Activated CD4-positive, alpha-beta T cell treated with anti-CD3 and anti-CD28 coated beads for 36 hours (primary cell): ENCODE measurements at regions of chr9 and their contacts with region 1.

Region 1: DNA sequence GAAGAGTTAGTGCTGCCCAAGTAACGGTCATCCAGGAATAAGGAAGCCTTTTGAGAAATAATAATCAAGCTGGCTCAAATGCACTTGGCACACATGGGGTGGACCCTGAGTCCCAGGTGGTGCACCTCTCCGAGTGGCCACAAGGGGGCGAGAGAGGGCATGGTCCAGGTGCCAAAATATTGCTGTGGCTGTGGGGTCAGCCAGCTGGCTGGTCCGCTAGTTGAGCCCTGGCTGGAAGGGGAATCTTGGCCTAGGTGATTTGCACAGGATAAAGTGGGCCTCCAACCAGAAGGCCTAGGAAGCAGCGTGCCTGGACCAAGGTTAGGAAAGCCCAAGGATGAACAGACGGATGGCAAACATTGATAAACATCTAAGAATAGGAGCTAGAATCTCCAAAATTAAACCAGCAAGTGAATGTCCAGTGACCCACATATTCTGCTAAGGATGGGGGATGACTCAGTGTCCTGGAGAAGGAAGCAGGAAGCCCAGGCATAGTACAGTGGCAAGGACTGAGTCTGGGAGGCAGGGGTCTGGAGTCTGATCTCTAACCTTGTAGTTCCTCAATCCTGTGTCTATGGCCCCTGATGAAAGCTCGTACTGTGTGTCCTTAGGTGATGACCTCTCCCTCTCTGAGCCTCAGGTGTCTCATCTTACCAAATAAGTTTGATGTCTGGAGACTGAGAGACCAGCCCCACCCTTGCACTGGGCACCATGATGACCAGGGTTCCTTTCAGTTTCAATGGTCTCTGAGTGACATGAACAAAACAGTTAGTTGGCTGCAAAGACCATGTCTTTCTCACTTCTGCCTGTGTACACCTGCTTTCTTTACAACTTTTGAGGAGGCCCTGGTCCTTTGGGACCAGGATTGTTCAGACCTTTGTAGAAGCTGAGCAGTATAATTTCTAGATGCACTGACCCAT is 19.2 kb upstream of the SHB start:
- DNase-seq: peak; percentile 82
- ATAC-seq: peak; percentile 65
- H3K4me3 Mint-ChIP-seq: no peak overlapping the region
- H3K27ac Mint-ChIP-seq: no peak overlapping the region
- H3K4me1 Mint-ChIP-seq: no peaks in the 10 kb centered on the region
- H3K27me3 Mint-ChIP-seq: no peaks in the 10 kb centered on the region

Region 2: DNA sequence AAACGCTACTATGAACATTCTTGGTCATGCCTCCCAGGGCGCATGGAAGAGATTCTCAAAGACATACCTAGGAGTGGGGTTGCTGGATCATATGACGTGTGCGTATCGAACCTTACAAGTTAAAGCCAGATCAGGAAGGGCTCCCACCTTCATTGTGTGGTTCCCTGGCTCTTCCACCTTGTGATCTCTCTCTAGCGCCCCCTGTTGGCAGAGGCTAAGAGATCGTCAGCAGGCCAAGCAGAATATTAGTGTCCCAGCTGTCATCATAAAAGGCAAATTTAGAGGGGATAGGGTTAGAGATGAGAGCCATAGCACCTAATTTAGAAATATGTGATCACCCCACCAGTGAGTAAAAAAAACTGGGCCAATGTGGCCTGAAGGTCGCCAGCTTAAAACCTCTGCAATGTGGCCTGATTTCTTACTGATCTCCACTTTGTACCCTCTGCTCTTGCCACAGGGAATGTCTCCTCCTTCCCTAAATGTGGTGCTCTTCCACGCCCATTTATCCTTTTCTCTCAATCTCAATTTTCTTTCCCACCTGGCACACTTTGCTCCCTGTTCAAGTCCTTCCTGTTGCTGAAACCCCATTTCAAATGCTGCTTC is 72.4 kb after region 1 on chr9:
- CTCF ChIA-PET with region 1: interaction called, 9 read pairs
- POLR2A ChIA-PET with region 1: no interaction called
- intact Hi-C with region 1: loop called in 1 of 2 experiments (anchors 1 kb)
- DNase-seq: peak; percentile 83
- ATAC-seq: peak; percentile 72
- H3K4me3 Mint-ChIP-seq: no peak overlapping the region
- H3K27ac Mint-ChIP-seq: no peak overlapping the region
- H3K4me1 Mint-ChIP-seq: peaks cover 2% of the 10 kb centered on the region
- H3K27me3 Mint-ChIP-seq: no peaks in the 10 kb centered on the region

Region 3: GRCh38 chr9:38263532-38263931 is 175.3 kb after region 1 on chr9:
- CTCF ChIA-PET with region 1: interaction called, 5 read pairs
- POLR2A ChIA-PET with region 1: no interaction called
- intact Hi-C with region 1: loop called in 1 of 2 experiments (anchors 5 kb)
- DNase-seq: no peak
- ATAC-seq: no peak
- H3K4me3 Mint-ChIP-seq: no peak overlapping the region
- H3K27ac Mint-ChIP-seq: no peak overlapping the region
- H3K4me1 Mint-ChIP-seq: no peaks in the 10 kb centered on the region
- H3K27me3 Mint-ChIP-seq: peaks cover 7% of the 10 kb centered on the region

Region 4: DNA sequence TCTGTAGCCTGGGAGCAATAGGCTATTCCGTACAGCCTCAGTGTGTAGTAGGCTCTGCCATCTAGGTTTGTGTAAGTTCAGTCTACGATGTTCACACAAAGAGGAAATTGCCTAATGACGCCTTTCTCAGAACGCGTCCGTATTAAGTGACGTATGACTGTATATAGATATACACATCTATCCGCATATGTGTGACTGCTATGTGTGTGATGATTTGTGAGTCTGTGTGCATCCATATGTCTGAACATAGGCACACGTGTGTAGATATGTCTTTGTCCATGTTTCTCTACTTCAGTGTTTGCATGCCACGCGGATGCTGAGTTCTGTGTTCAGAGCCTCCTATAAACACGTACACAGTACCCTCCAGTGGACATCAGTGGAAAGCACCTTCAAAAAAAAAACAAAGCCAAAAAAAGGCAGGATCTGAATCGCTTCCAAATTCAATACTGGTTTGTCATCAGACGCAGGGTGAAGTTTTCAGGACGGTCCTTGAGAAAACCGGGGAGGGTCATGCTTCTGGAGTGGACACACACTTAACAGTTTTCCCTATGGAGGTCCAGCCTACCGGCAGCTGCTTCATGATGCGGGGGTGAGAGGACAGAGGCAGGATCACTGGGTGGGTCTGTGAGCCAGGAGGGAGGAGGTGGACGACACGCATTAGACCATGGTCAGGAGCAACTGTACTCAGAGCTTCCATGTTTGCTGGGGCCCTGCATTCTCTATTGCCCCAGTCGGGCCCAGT is 274.8 kb after region 1 on chr9:
- CTCF ChIA-PET with region 1: interaction called, 3 read pairs
- POLR2A ChIA-PET with region 1: no interaction called
- intact Hi-C with region 1: loop called (anchors 1 to 2 kb)
- DNase-seq: peak; percentile 44
- ATAC-seq: peak; percentile 75
- H3K4me3 Mint-ChIP-seq: no peak overlapping the region
- H3K27ac Mint-ChIP-seq: peak overlapping the region; percentile 11
- H3K4me1 Mint-ChIP-seq: peaks cover 4% of the 10 kb centered on the region
- H3K27me3 Mint-ChIP-seq: peaks cover 4% of the 10 kb centered on the region

Region 5: GRCh38 chr9:38408719-38409118 is 320.5 kb after region 1 on chr9:
- CTCF ChIA-PET with region 1: interaction called, 5 read pairs
- POLR2A ChIA-PET with region 1: no interaction called
- intact Hi-C with region 1: loop called in 1 of 2 experiments (anchors 10 kb)
- DNase-seq: no peak
- ATAC-seq: peak; percentile 61
- H3K4me3 Mint-ChIP-seq: no peak overlapping the region
- H3K27ac Mint-ChIP-seq: no peak overlapping the region
- H3K4me1 Mint-ChIP-seq: peaks cover 2% of the 10 kb centered on the region
- H3K27me3 Mint-ChIP-seq: peaks cover 7% of the 10 kb centered on the region